CD8-positive, alpha-beta T cell (primary cell): ENCODE measurements at regions of chr12 and their contacts with region 1.

Region 1: GRCh38 chr12:6927379-6928024 is at the start of gene ATN1:
- DNase-seq: peak in 6 of 9 experiments; percentile 36 to 69 (median 58)
- ATAC-seq: peak; percentile 44
- H3K4me3 ChIP-seq: peak within 1 kb of the TSS; percentile 52 to 64
- H3K4me3 Mint-ChIP-seq: peak within 1 kb of the TSS; percentile 85
- H3K27ac ChIP-seq: peak within 1 kb of the TSS; percentile 51 to 71
- H3K27ac Mint-ChIP-seq: peak within 1 kb of the TSS; percentile 91
- H3K4me1 ChIP-seq: peaks cover 31% of the 10 kb centered on the region
- H3K4me1 Mint-ChIP-seq: peaks cover 44% of the 10 kb centered on the region
- H3K27me3 ChIP-seq: no peaks in the 10 kb centered on the region
- H3K27me3 Mint-ChIP-seq: no peaks in the 10 kb centered on the region
- CTCF ChIP-seq: no peak
- total RNA-seq, gene ATN1: 26.5 to 33.4 TPM

Region 2: DNA sequence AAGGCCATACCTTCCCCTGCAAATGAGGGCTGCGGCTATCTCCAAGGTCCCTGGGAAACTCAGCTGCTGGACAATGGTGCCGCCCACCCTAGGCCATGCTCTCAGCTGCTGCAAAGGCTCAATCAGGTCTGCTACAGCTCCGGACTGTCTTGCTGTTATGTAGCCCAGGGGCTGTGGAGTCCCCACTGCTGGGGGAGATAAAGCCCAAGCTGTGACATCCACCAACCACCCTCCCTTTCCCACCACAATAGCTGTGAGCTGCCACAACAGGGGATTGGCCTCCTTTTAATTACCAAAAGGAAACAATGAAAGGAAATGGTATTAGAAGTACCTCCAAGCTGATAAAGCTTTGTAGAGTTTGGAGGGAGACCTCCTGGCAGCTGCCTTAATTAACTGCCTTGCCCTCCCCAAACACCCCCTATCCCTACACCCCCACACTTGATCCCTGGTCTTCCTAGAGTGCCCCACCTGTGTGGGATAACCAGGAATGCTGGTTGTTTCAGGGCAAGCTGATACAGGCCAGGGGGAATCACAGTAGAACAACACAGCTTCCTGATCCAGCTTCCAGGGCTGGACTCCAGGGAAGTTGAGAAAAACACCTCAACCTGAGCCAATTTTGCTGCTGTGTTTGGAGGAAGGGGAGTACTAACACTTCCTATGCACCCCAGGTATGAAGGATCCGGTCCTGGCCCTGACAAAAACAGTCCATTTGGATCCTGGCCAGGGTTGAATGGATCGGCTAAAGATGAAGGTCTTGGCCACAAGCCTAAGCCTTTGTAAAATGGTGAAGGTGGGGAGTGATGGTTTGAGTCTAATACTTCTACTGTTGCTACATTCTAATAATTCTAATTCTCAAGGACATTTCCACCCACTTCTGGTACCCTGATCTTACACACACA is 802.8 kb before region 1 on chr12 and contains the start of gene VWF:
- CTCF ChIA-PET with region 1: no interaction called
- POLR2A ChIA-PET with region 1: no interaction called
- intact Hi-C with region 1: no loop called
- DNase-seq: no peak
- ATAC-seq: no peak
- H3K4me3 ChIP-seq: no peak within 1 kb of the TSS
- H3K4me3 Mint-ChIP-seq: no peak within 1 kb of the TSS
- H3K27ac ChIP-seq: no peak within 1 kb of the TSS
- H3K27ac Mint-ChIP-seq: no peak within 1 kb of the TSS
- H3K4me1 ChIP-seq: no peaks in the 10 kb centered on the region
- H3K4me1 Mint-ChIP-seq: no peaks in the 10 kb centered on the region
- H3K27me3 ChIP-seq: no peaks in the 10 kb centered on the region
- H3K27me3 Mint-ChIP-seq: no peaks in the 10 kb centered on the region
- CTCF ChIP-seq: no peak
- total RNA-seq, gene VWF: not detected

Region 3: GRCh38 chr12:6582196-6582595 is 345.3 kb before region 1 on chr12:
- CTCF ChIA-PET with region 1: no interaction called
- POLR2A ChIA-PET with region 1: no interaction called
- intact Hi-C with region 1: no loop called
- DNase-seq: no peak
- ATAC-seq: no peak
- H3K4me3 ChIP-seq: no peak overlapping the region
- H3K4me3 Mint-ChIP-seq: no peak overlapping the region
- H3K27ac ChIP-seq: no peak overlapping the region
- H3K27ac Mint-ChIP-seq: no peak overlapping the region
- H3K4me1 ChIP-seq: no peaks in the 10 kb centered on the region
- H3K4me1 Mint-ChIP-seq: no peaks in the 10 kb centered on the region
- H3K27me3 ChIP-seq: no peaks in the 10 kb centered on the region
- H3K27me3 Mint-ChIP-seq: no peaks in the 10 kb centered on the region
- CTCF ChIP-seq: no peak

Region 4: GRCh38 chr12:6867413-6868210 is 59.9 kb before region 1 on chr12 and contains the start of gene TPI1:
- CTCF ChIA-PET with region 1: interaction called, 42 read pairs
- POLR2A ChIA-PET with region 1: interaction called, 3 read pairs
- intact Hi-C with region 1: loop called in 1 of 2 experiments (anchors 1 kb)
- DNase-seq: peak; percentile 48 to 86 (median 77)
- ATAC-seq: peak; percentile 70
- H3K4me3 ChIP-seq: peak within 1 kb of the TSS; percentile 54 to 64
- H3K4me3 Mint-ChIP-seq: peak within 1 kb of the TSS; percentile 89
- H3K27ac ChIP-seq: peak within 1 kb of the TSS; percentile 53 to 81
- H3K27ac Mint-ChIP-seq: peak within 1 kb of the TSS; percentile 85
- H3K4me1 ChIP-seq: peaks cover 49% of the 10 kb centered on the region
- H3K4me1 Mint-ChIP-seq: peaks cover 57% of the 10 kb centered on the region
- H3K27me3 ChIP-seq: no peaks in the 10 kb centered on the region
- H3K27me3 Mint-ChIP-seq: no peaks in the 10 kb centered on the region
- CTCF ChIP-seq: no peak
- total RNA-seq, gene TPI1: 59.6 to 64.0 TPM

Region 5: DNA sequence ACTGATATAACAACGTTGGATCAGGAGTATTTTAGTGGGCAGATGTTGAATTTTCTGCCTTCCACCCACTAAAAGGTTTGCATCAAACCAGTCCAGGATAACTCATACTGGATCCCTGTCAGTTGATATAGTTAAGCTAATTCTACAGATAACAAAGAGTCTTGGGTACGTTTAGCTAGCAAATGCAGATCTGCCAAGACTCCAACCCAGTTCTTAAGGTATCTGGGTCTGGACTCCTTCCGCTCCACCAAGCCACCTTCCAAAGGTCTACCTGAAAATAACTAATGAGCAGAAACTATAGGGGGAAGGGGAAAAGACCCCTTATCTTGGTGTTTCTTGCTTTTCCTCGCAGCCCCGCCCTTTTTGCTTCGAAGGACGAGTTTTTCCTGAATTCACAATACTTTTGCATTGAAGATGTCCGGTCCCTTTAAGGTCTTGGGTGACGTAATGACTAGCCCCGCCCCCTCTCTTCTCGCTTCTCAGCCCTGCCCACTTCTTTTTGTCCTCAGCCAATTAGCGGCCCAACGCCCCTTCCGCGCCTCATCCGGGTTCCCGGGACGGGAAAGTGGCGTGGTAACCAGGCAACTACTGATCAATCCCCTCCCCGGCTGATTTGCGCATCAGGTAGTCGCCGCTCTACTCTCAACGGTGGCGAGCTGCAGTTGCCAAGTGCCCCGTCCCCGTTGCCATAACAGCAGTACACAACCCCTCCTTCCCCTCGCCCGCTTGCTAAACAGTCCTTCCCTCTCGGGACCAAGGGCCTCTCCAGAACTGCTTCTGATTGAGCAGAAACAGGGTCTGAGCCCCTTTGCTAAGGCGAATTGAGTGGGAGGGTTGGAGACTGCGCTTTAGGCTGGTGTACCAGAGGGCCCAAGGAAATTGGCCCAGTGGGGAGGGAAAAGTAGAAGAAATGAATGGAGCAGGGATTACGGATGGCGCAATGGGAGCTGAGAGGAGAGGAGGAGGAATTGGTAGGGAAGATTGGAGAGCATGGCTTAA is 22.9 kb before region 1 on chr12 and contains the start of gene LRRC23:
- CTCF ChIA-PET with region 1: interaction called, 83 read pairs
- POLR2A ChIA-PET with region 1: no interaction called
- intact Hi-C with region 1: no loop called
- DNase-seq: peak; percentile 92 to 99 (median 97)
- ATAC-seq: peak; percentile 96
- H3K4me3 ChIP-seq: peak within 1 kb of the TSS; percentile 56 to 64
- H3K4me3 Mint-ChIP-seq: peak within 1 kb of the TSS; percentile 5
- H3K27ac ChIP-seq: peak within 1 kb of the TSS; percentile 86 to 88
- H3K27ac Mint-ChIP-seq: no peak within 1 kb of the TSS
- H3K4me1 ChIP-seq: peaks cover 15% of the 10 kb centered on the region
- H3K4me1 Mint-ChIP-seq: no peaks in the 10 kb centered on the region
- H3K27me3 ChIP-seq: no peaks in the 10 kb centered on the region
- H3K27me3 Mint-ChIP-seq: no peaks in the 10 kb centered on the region
- CTCF ChIP-seq: no peak
- total RNA-seq, gene LRRC23: 6.5 to 7.2 TPM

Region 6: DNA sequence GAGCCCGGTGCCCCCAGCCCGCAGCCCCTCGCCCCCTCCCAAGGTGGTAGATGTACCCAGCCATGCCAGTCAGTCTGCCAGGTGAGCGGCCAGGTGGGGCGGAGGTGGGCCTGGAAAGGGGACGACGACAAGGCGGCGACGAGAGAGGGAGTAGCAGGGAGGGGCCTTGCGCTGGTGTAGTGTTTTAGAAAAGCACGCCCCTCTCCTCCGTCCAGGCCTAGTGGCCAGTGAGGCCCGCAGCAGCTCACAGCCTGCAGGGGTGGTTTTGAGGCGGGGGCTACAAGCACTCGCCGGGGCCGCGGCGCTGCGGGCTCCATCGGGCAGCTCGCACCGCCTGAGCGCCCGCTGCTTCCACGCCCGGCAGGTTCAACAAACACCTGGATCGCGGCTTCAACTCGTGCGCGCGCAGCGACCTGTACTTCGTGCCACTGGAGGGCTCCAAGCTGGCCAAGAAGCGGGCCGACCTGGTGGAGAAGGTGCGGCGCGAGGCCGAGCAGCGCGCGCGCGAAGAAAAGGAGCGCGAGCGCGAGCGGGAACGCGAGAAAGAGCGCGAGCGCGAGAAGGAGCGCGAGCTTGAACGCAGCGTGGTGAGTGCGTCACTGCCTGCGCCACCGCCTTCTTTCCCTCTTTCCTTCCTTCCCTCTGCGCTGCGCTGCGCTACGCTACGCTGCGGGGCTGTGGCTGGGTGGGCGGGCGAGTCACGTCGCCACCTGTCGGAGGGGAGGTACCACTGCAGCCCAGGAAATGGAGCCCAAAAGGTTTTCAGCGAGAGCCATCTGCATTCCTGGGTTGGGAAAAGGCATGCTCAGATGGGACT is 10.2 kb after region 1 on chr12:
- CTCF ChIA-PET with region 1: interaction called, 180 read pairs
- POLR2A ChIA-PET with region 1: interaction called, 31 read pairs
- intact Hi-C with region 1: loop called in 1 of 2 experiments (anchors 1 kb)
- DNase-seq: peak; percentile 84 to 99 (median 92)
- ATAC-seq: peak; percentile 91
- H3K4me3 ChIP-seq: peak overlapping the region; percentile 60 to 91
- H3K4me3 Mint-ChIP-seq: peak overlapping the region; percentile 83
- H3K27ac ChIP-seq: peak overlapping the region; percentile 89 to 91
- H3K27ac Mint-ChIP-seq: peak overlapping the region; percentile 96
- H3K4me1 ChIP-seq: peaks cover 25% of the 10 kb centered on the region
- H3K4me1 Mint-ChIP-seq: peaks cover 48% of the 10 kb centered on the region
- H3K27me3 ChIP-seq: no peaks in the 10 kb centered on the region
- H3K27me3 Mint-ChIP-seq: no peaks in the 10 kb centered on the region
- CTCF ChIP-seq: peak; percentile 90

Region 7: GRCh38 chr12:7018350-7019042 is 91.0 kb after region 1 on chr12 and contains the start of gene LPCAT3:
- CTCF ChIA-PET with region 1: interaction called, 7 read pairs
- POLR2A ChIA-PET with region 1: no interaction called
- intact Hi-C with region 1: loop called in 1 of 2 experiments (anchors 2 kb)
- DNase-seq: peak; percentile 94 to 99 (median 97)
- ATAC-seq: peak; percentile 97
- H3K4me3 ChIP-seq: peak within 1 kb of the TSS; percentile 82 to 99
- H3K4me3 Mint-ChIP-seq: peak within 1 kb of the TSS; percentile 90
- H3K27ac ChIP-seq: peak within 1 kb of the TSS; percentile 79 to 92
- H3K27ac Mint-ChIP-seq: peak within 1 kb of the TSS; percentile 88
- H3K4me1 ChIP-seq: peaks cover 13% of the 10 kb centered on the region
- H3K4me1 Mint-ChIP-seq: peaks cover 37% of the 10 kb centered on the region
- H3K27me3 ChIP-seq: no peaks in the 10 kb centered on the region
- H3K27me3 Mint-ChIP-seq: no peaks in the 10 kb centered on the region
- CTCF ChIP-seq: peak; percentile 85
- total RNA-seq, gene LPCAT3: 24.4 to 27.1 TPM

Region 8: DNA sequence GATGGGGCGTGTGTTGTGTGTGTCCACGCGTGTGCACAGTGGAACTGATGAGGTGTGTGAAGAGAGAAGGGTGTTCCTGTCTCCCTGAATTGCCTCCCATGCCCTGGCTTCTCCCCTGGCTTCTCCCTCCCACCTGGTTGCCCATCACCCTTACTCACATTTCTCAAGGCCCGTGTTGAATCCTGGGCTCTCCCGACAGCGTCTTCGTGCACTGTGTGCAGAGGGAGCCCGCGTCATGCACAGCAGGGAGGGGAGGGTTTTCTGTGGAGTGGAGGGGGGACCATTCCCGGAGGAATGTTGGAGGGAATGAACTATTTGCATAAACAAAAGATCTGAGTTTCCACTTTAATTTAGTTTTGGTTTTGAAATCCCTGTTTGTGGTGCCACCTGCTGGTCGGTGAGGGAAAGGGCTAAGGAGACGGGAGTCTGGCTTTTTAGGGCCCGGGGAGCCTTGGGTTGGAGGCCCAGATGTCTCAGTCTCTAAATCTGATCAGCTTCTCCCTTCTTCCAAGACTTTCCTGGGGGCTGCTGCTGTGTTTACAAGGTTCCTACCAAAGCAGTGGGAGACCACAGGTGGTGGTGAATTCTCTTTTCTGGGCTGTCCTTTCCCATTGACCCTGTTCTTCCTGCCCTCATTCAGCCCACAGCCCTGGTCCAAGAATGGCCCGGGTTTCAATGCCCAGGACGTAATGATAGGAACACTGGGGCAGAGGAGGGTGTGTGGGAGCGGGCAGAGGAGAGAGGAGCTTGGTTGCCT is 164.9 kb after region 1 on chr12 and contains the start of gene C1R:
- CTCF ChIA-PET with region 1: interaction called, 41 read pairs
- POLR2A ChIA-PET with region 1: no interaction called
- intact Hi-C with region 1: loop called (anchors 1 kb)
- DNase-seq: peak; percentile 36 to 81 (median 72)
- ATAC-seq: peak; percentile 89
- H3K4me3 ChIP-seq: peak within 1 kb of the TSS; percentile 49 to 66
- H3K4me3 Mint-ChIP-seq: peak within 1 kb of the TSS; percentile 88
- H3K27ac ChIP-seq: no peak within 1 kb of the TSS
- H3K27ac Mint-ChIP-seq: peak within 1 kb of the TSS; percentile 29
- H3K4me1 ChIP-seq: peaks cover 14% of the 10 kb centered on the region
- H3K4me1 Mint-ChIP-seq: peaks cover 11% of the 10 kb centered on the region
- H3K27me3 ChIP-seq: no peaks in the 10 kb centered on the region
- H3K27me3 Mint-ChIP-seq: no peaks in the 10 kb centered on the region
- CTCF ChIP-seq: peak; percentile 82
- total RNA-seq, gene C1R: 3.8 TPM